ENCODE measurements at regions of chrX and their contacts with region 1.

Region 1: DNA sequence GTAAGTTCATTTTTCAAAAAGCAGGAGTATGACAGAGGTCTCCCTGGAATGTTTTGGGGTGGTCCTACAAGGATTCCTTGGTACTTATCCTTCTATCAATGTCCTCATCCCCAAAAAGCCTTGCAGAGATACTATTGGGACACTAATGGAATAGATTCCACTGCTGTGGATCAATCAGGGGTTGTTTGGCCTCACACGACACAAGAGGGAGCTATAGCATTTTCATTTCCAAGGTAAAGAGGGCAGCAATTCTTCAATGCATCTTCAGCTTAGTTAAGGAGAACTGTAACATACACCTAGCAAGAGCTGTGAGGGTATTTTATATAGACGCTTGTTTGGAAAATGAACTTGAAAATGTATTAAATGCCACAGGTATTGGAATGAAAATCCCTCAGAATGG is 50.9 kb downstream of the USP26 start:
- H3K4me3 ChIP-seq: no peak overlapping the region
- H3K27ac ChIP-seq: no peak overlapping the region
- H3K4me1 ChIP-seq: no peaks in the 10 kb centered on the region
- CTCF ChIP-seq: no peak

Region 2: GRCh38 chrX:132615391-132616131 is 430.4 kb before region 1 on chrX:
- CTCF ChIA-PET with region 1: no interaction called
- POLR2A ChIA-PET with region 1: no interaction called
- H3K4me3 ChIP-seq: no peak overlapping the region
- H3K27ac ChIP-seq: no peak overlapping the region
- H3K4me1 ChIP-seq: no peaks in the 10 kb centered on the region
- CTCF ChIP-seq: no peak

Region 3: GRCh38 chrX:133056341-133056740 is 10.4 kb after region 1 on chrX:
- CTCF ChIA-PET with region 1: interaction called, 10 read pairs
- POLR2A ChIA-PET with region 1: no interaction called
- H3K4me3 ChIP-seq: no peak overlapping the region
- H3K27ac ChIP-seq: no peak overlapping the region
- H3K4me1 ChIP-seq: no peaks in the 10 kb centered on the region
- CTCF ChIP-seq: no peak

Region 4: DNA sequence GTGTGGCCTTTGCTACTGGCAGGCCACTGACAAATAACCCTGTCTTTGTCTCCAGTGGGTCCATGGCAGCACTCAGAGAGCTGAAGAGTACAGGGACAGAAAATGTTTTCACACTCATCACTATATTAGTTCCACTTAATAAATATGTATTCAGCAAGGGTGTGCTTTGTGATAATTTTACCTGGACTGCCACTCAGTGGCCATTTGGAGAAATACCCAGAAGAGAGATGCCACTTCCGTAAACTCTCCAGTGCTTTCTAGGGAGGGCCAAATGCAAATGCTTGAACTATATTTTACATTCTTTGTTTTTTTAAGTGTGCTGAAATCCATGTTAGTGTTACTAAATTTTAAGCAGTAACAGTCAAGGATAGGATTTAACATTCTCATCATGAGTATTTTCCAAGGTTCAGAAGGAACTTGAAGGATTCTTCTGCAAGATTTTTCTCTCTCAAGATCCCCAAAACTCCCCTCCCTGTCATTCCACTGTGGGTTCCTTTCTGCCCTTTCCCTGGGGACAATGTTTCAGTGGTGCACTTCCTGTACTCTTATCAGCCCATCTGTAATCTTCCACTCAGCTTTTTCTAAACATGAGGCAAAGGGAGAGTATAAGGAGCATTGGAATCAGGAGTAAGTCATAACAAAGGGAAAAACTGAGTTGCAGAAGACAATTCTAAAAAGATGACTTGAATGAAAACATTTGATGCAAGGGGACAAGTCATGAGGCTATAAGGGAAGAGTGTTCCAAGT is 126.1 kb after region 1 on chrX:
- CTCF ChIA-PET with region 1: interaction called, 37 read pairs
- POLR2A ChIA-PET with region 1: no interaction called
- H3K4me3 ChIP-seq: no peak overlapping the region
- H3K27ac ChIP-seq: no peak overlapping the region
- H3K4me1 ChIP-seq: no peaks in the 10 kb centered on the region
- CTCF ChIP-seq: peak; percentile 47; the same call in 1 of the 2 replicates